B cell (primary cell): ENCODE measurements at regions of chr4 and their contacts with region 1.

Region 1: DNA sequence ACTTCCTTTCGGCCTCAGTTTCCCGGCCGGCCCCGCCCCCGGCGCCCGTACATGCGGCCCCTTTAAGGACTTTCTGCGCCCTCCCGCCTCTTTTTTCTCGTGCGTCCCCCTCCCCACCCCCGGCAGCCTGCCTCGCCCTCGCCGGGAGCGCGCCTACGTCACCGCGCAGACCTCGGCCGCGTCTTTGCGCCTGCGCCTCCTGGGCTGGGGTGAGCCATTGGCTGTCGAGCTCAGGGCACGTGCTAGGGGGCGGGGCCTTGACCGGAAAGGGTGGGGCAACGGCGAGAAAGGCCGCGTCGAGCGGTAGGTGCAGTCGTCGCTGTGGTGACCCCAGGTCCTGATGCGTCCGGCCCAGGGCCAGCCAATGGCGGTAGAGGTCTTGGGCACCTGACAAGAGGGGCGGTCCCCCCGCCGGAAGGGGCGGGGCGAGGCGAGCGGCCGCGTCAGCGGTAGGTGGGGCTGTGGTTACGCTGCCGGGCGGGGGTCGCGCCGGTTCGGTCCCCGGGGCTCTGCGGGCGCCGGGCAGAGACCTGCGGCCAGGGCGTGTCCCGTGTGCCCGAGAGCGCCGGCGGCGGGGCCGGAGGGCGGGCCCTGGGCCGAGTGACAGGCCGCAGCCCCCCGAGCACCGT is at the start of gene UVSSA:
- DNase-seq: peak; percentile 100
- ATAC-seq: peak; percentile 90
- H3K4me3 ChIP-seq: peak within 1 kb of the TSS; percentile 23 to 86 (median 82)
- H3K4me3 Mint-ChIP-seq: peak within 1 kb of the TSS; percentile 93
- H3K27ac ChIP-seq: peak within 1 kb of the TSS; percentile 91
- H3K27ac Mint-ChIP-seq: peak within 1 kb of the TSS; percentile 96
- H3K4me1 ChIP-seq: peaks cover 15 to 26% of the 10 kb centered on the region in 2 donors
- H3K4me1 Mint-ChIP-seq: peaks cover 33% of the 10 kb centered on the region
- H3K27me3 ChIP-seq: no peaks in the 10 kb centered on the region
- H3K27me3 Mint-ChIP-seq: no peaks in the 10 kb centered on the region
- CTCF ChIP-seq: no peak
- total RNA-seq, gene UVSSA: 40.5 and 47.3 TPM in 2 replicates

Region 2: GRCh38 chr4:781493-782216 is 565.2 kb before region 1 on chr4:
- CTCF ChIA-PET with region 1: no interaction called
- POLR2A ChIA-PET with region 1: no interaction called
- intact Hi-C with region 1: loop called (anchors 2 kb)
- DNase-seq: peak; percentile 99
- ATAC-seq: peak; percentile 94
- H3K4me3 ChIP-seq: peak overlapping the region; percentile 23 to 97 (median 85)
- H3K4me3 Mint-ChIP-seq: peak overlapping the region; percentile 94
- H3K27ac ChIP-seq: peak overlapping the region; percentile 82 to 95
- H3K27ac Mint-ChIP-seq: peak overlapping the region; percentile 91
- H3K4me1 ChIP-seq: peaks cover 38 to 40% of the 10 kb centered on the region in 2 donors
- H3K4me1 Mint-ChIP-seq: peaks cover 48% of the 10 kb centered on the region
- H3K27me3 ChIP-seq: peaks cover 0 to 26% (median 11%) of the 10 kb centered on the region in 4 experiments
- H3K27me3 Mint-ChIP-seq: peaks cover 18% of the 10 kb centered on the region
- CTCF ChIP-seq: no peak

Region 3: GRCh38 chr4:1011022-1011694 is 335.7 kb before region 1 on chr4 and contains the start of gene FGFRL1:
- CTCF ChIA-PET with region 1: no interaction called
- POLR2A ChIA-PET with region 1: no interaction called
- intact Hi-C with region 1: loop called (anchors 2 kb)
- DNase-seq: peak; percentile 92
- ATAC-seq: peak; percentile 63
- H3K4me3 ChIP-seq: peak within 1 kb of the TSS in 4 of 5 experiments; percentile 60 to 74 (median 66)
- H3K4me3 Mint-ChIP-seq: peak within 1 kb of the TSS; percentile 91
- H3K27ac ChIP-seq: peak within 1 kb of the TSS; percentile 36 to 38
- H3K27ac Mint-ChIP-seq: peak within 1 kb of the TSS; percentile 89
- H3K4me1 ChIP-seq: peaks cover 24 to 30% of the 10 kb centered on the region in 2 donors
- H3K4me1 Mint-ChIP-seq: peaks cover 20% of the 10 kb centered on the region
- H3K27me3 ChIP-seq: peaks cover 0 to 24% (median 12%) of the 10 kb centered on the region in 4 experiments
- H3K27me3 Mint-ChIP-seq: peaks cover 29% of the 10 kb centered on the region
- CTCF ChIP-seq: no peak
- total RNA-seq, gene FGFRL1: 28.5 and 28.9 TPM in 2 replicates

Region 4: GRCh38 chr4:1055721-1056590 is 290.9 kb before region 1 on chr4:
- CTCF ChIA-PET with region 1: no interaction called
- POLR2A ChIA-PET with region 1: no interaction called
- intact Hi-C with region 1: loop called (anchors 1 kb)
- DNase-seq: peak; percentile 95
- ATAC-seq: peak; percentile 97
- H3K4me3 ChIP-seq: peak overlapping the region; percentile 36 to 66 (median 51)
- H3K4me3 Mint-ChIP-seq: peak overlapping the region; percentile 70
- H3K27ac ChIP-seq: peak overlapping the region; percentile 73 to 76
- H3K27ac Mint-ChIP-seq: peak overlapping the region; percentile 84
- H3K4me1 ChIP-seq: peaks cover 11 to 17% of the 10 kb centered on the region in 2 donors
- H3K4me1 Mint-ChIP-seq: peaks cover 10% of the 10 kb centered on the region
- H3K27me3 ChIP-seq: peaks cover 0 to 19% (median 3%) of the 10 kb centered on the region in 4 experiments
- H3K27me3 Mint-ChIP-seq: peaks cover 10% of the 10 kb centered on the region
- CTCF ChIP-seq: no peak

Region 5: DNA sequence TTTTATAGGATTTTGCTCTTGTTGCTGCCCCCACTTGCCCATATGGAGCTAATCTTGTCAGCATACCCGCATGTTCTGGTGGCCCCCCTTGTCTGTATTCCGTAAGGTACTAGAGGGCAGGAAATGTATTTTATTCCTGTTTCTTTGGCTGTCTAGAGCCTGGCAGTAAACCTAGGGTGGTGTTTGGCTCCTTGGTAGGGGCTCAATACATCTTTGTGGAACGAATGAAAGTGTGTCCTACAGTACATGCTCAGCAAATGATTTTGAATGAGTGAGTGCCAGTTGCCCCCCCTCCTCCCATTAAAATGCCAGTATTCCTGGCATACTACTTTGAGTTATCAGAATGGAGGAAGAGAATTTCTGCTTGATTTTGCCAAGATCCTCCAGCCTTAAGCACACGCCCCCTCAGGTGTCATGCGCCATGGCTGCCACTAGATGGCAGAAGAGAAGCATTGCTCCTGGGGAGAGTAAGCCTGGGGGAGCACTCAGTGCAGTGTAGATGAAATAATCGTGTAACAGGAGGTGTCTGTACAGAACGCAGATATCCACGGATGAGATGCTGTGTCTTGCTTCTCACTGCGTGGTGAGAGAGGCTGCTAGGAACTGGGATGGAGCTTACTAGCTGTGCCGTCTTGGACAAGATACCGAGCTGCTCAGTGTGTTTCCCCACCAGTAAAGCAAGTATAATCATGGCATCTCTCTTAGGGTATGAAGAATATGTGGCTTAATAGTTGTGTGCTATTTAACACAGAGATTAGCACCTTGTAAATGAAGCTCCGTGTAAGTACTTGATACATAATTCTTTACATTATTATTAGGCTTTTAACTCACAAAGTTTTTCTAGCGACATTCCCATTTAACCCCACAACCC is 216.3 kb before region 1 on chr4:
- CTCF ChIA-PET with region 1: interaction called, 102 read pairs
- POLR2A ChIA-PET with region 1: interaction called, 4 read pairs
- intact Hi-C with region 1: loop called (anchors 1 kb)
- DNase-seq: peak; percentile 89
- ATAC-seq: peak; percentile 99
- H3K4me3 ChIP-seq: no peak overlapping the region
- H3K4me3 Mint-ChIP-seq: no peak overlapping the region
- H3K27ac ChIP-seq: no peak overlapping the region
- H3K27ac Mint-ChIP-seq: no peak overlapping the region
- H3K4me1 ChIP-seq: peaks cover 18% of the 10 kb centered on the region in 2 donors
- H3K4me1 Mint-ChIP-seq: peaks cover 22% of the 10 kb centered on the region
- H3K27me3 ChIP-seq: no peaks in the 10 kb centered on the region
- H3K27me3 Mint-ChIP-seq: peaks cover 12% of the 10 kb centered on the region
- CTCF ChIP-seq: peak; percentile 100

Region 6: GRCh38 chr4:1249148-1249730 is 97.7 kb before region 1 on chr4:
- CTCF ChIA-PET with region 1: interaction called, 23 read pairs
- POLR2A ChIA-PET with region 1: interaction called, 41 read pairs
- intact Hi-C with region 1: no loop called
- DNase-seq: peak; percentile 95
- ATAC-seq: peak; percentile 73
- H3K4me3 ChIP-seq: peak overlapping the region; percentile 23 to 81 (median 62)
- H3K4me3 Mint-ChIP-seq: peak overlapping the region; percentile 92
- H3K27ac ChIP-seq: peak overlapping the region; percentile 84 to 85
- H3K27ac Mint-ChIP-seq: peak overlapping the region; percentile 97
- H3K4me1 ChIP-seq: peaks cover 47 to 57% of the 10 kb centered on the region in 2 donors
- H3K4me1 Mint-ChIP-seq: peaks cover 60% of the 10 kb centered on the region
- H3K27me3 ChIP-seq: no peaks in the 10 kb centered on the region
- H3K27me3 Mint-ChIP-seq: no peaks in the 10 kb centered on the region
- CTCF ChIP-seq: no peak

Region 7: GRCh38 chr4:1289207-1290164 is 57.4 kb before region 1 on chr4 and contains the start of gene MAEA:
- CTCF ChIA-PET with region 1: interaction called, 3 read pairs
- POLR2A ChIA-PET with region 1: interaction called, 16 read pairs
- intact Hi-C with region 1: loop called (anchors 1 kb)
- DNase-seq: peak; percentile 97
- ATAC-seq: peak; percentile 97
- H3K4me3 ChIP-seq: peak within 1 kb of the TSS; percentile 66 to 83 (median 79)
- H3K4me3 Mint-ChIP-seq: peak within 1 kb of the TSS; percentile 94
- H3K27ac ChIP-seq: peak within 1 kb of the TSS; percentile 65 to 88
- H3K27ac Mint-ChIP-seq: peak within 1 kb of the TSS; percentile 86
- H3K4me1 ChIP-seq: peaks cover 34 to 43% of the 10 kb centered on the region in 2 donors
- H3K4me1 Mint-ChIP-seq: peaks cover 38% of the 10 kb centered on the region
- H3K27me3 ChIP-seq: no peaks in the 10 kb centered on the region
- H3K27me3 Mint-ChIP-seq: no peaks in the 10 kb centered on the region
- CTCF ChIP-seq: no peak
- total RNA-seq, gene MAEA: 103 and 106 TPM in 2 replicates